Dorsolateral prefrontal cortex (tissue), 120 donors: ENCODE measurements at regions of chr4 and their contacts with region 1.

Region 1: DNA sequence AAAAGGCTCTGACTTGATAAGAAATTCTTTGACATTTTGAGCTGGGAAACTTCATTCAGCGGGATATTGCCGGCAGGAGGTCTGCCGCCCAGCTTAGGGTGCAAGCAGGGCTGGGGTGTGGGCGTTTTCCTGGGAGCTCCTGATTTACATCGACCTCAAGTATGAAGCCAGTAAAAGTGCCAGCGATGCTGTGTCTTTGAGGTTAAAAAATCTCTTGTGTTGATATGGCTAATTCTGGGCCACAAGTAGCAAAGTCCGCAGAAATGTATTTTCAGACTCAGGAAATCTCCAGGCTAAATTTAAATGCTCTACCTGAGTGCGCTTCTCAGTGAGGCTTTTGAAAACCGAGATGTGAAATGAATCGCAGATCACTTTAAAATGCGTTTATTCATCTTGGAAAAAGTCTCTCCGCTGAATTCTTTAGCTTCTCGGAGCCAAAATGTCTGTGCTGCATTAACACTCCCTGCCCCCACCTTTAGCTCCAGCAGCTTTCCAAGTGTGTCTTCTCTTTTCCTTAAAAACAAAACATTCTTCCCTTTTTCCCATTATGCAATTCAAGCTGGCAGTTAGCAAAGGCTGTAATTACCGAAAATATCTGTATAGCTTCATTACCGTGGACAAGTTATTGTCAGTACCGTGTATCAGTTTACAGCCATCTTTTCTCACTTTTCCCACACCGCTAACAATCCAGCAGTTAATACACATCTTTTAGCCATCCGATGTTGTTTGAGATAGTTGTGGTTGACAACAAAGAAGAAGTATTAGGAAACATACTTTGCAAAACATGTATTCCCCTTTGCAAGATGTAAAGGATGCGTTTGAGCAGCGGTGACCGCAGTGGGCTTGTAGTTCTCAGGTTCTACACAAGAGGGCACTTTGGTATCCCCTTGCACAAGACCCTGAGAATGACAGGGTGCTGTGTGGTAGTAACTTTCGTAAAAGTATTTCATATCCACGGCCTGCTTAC is 136.0 kb upstream of the STX18 start:
- DNase-seq: peak in 2 of 10 donors; percentile 41 to 46
- H3K4me3 ChIP-seq: peak overlapping the region in 41 of 59 donors; percentile 2 to 55 (median 28)
- H3K27ac ChIP-seq: no peak overlapping the region
- H3K27me3 ChIP-seq: no peaks in the 10 kb centered on the region
- CTCF ChIP-seq: peak in 55 of 56 donors; percentile 40 to 76 (median 60)

Region 2: DNA sequence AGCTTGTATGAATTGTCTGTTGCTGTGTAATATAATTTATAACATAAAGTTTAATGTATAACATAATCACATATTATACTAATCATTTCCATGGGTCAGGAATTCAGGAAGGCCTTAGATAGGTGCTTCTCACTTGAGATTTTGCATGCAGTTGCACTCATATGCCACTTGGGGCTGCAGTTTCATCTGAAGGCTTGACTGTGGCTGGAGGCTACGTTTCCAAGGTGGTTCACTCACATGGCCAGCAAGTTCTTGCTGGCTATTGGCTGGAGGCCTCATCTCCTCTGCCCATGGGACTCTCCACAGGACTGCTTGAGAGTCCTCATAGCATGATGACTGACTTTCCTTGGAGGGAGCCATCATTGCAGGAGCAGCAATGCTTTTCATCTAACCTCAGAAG is 82.6 kb before region 1 on chr4:
- intact Hi-C with region 1: no loop called
- DNase-seq: no peak
- H3K4me3 ChIP-seq: no peak overlapping the region
- H3K27ac ChIP-seq: no peak overlapping the region
- H3K27me3 ChIP-seq: no peaks in the 10 kb centered on the region
- CTCF ChIP-seq: peak in 2 of 56 donors; percentile 14 to 36

Region 3: DNA sequence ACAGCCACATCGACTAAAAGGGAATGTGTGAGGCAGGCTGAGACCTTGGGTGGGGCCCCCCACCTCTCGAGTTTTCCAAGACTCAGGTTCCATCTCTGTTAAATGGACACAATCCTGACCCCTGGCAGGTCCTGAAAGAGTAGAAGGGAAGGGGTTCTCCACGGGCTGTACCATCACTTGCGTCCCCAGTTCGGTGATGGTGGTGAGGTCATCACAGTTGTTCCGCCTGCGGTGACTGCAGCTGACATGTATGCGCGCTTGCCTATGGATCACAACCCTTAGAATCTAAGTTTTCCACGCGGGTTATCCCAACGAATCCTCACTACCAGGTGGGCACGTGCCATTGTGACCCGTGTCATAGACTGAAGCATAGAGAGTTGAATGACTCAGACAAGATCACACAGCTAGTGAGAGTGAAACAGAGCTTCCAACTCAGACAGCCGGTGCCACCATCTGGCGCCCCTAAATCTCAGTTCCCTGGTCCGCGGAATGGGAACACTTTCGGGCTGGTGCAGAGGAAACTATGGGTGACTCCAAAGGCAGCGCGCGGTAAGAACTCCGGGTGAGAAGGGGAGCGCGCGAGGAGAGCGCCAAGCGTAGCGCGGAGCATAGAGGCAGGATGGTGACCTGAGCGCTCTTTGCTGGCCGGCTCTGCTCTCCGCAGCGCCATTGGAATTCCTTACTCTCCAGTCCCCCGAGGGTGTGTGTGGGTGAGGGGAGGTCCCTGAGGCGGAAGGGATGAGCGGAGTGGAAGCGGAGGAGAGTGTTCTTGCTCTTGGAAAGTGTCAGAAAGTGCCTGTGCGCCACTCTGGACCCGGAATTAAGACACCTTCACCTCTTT is 192.1 kb after region 1 on chr4:
- intact Hi-C with region 1: loop called in 1 of 2 experiments (anchors 10 kb)
- DNase-seq: peak in 1 of 10 donors; percentile 16
- H3K4me3 ChIP-seq: peak overlapping the region in 3 of 59 donors; percentile 2 to 27 (median 13)
- H3K27ac ChIP-seq: no peak overlapping the region
- H3K27me3 ChIP-seq: peaks cover 17 to 100% (median 99%) of the 10 kb centered on the region in 45 donors
- CTCF ChIP-seq: no peak

Region 4: DNA sequence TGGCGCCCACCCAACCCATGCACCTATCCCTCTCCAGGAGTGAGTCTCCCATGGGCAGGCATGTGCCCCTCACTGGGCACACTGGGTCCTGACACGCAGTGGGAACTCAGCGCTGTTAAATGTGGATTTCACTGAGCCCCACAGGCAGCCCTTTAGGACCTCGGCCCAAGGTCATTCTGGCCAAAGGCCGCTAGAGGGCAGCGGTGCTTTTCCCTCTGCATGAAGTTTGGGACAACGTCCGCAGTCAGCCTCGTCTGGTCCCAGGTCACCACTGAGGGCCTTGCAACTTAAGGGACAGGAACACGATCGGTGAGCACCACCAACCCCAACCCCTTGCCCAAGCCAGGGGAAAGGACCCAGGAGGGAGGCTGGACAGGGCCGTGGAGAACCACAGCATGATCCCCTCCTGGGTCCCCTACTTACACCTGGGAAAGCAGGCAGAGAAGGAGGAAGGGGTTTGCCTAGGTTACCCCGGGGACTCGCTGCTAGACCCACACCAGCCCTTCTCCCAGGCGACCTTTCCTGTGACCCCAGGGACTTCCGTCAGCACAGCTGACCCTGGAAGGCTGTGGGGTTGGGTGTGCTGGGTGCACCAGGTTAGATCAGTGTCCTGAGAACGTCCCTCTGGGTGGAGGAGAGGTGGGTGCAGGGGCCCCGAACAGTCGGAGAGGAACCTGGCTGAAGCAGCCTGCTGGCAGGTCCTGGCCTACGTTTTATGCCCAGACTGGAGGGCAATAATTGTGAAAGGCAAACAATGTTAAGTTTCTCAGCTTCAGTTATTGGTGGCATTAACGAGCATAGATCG is 317.5 kb after region 1 on chr4:
- intact Hi-C with region 1: loop called in 1 of 2 experiments (anchors 10 kb)
- DNase-seq: peak in 9 of 10 donors; percentile 33 to 75 (median 61)
- H3K4me3 ChIP-seq: no peak overlapping the region
- H3K27ac ChIP-seq: no peak overlapping the region
- H3K27me3 ChIP-seq: peaks cover 0 to 8% (median 0%) of the 10 kb centered on the region in 45 donors
- CTCF ChIP-seq: peak; percentile 63 to 94 (median 85)